Naive thymus-derived CD4-positive, alpha-beta T cell (primary cell): ENCODE measurements at regions of chr11 and their contacts with region 1.

Region 1: DNA sequence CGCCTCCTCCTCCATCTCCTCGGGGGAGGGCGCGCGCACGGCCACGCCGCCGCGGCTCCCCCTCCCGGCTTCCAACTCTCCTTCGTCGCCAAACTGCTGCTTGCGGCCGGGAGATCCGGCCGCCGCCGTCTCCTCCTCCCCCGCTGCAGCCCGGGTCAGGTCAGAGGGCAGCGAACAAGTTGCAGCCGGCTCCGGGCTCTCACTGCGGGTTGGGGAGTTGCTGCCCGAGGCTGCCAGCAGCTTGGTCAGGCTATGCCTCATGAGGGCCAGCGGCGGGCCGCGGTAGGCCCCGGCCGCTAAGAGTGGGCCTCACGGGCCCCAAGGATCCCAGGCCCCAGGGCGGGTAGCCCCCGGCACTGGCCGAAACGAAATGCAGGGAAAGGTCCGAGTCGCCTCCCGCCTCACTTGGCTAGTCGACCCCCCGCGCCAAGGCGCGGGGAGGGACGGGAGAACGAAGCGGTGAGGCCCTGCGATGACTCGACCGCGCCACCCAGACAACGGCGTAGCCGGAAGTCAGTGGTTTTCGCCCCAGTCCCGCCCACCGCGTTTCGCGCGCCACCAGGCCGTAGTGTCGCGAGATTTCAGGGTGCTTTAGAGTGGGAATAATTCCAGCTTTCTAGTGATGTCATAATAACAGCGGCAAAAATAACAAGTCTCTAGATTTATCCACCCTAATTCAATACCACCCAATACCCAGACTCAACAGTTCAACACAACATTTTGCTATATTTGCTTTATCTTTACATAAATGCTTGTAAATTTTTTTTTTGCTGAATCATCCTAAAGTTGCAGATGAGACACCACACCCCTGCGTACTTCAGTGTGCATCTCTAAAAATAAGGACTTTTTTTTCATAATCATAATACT is at the start of gene CREBZF:
- DNase-seq: peak; percentile 83 to 96 (median 92)
- ATAC-seq: peak; percentile 85
- H3K4me3 ChIP-seq: peak within 1 kb of the TSS; percentile 97
- H3K4me3 Mint-ChIP-seq: peak within 1 kb of the TSS; percentile 93 to 100 (median 99)
- H3K27ac ChIP-seq: peak within 1 kb of the TSS; percentile 99
- H3K27ac Mint-ChIP-seq: peak within 1 kb of the TSS; percentile 96 to 100 (median 99)
- H3K4me1 ChIP-seq: peaks cover 19 to 31% of the 10 kb centered on the region in 2 donors
- H3K4me1 Mint-ChIP-seq: peaks cover 29 to 55% (median 39%) of the 10 kb centered on the region in 7 donors
- H3K27me3 ChIP-seq: no peaks in the 10 kb centered on the region
- H3K27me3 Mint-ChIP-seq: peaks cover 0 to 5% (median 0%) of the 10 kb centered on the region in 5 donors
- total RNA-seq, gene CREBZF: 56.9 to 114 (median 59.7) TPM

Region 2: DNA sequence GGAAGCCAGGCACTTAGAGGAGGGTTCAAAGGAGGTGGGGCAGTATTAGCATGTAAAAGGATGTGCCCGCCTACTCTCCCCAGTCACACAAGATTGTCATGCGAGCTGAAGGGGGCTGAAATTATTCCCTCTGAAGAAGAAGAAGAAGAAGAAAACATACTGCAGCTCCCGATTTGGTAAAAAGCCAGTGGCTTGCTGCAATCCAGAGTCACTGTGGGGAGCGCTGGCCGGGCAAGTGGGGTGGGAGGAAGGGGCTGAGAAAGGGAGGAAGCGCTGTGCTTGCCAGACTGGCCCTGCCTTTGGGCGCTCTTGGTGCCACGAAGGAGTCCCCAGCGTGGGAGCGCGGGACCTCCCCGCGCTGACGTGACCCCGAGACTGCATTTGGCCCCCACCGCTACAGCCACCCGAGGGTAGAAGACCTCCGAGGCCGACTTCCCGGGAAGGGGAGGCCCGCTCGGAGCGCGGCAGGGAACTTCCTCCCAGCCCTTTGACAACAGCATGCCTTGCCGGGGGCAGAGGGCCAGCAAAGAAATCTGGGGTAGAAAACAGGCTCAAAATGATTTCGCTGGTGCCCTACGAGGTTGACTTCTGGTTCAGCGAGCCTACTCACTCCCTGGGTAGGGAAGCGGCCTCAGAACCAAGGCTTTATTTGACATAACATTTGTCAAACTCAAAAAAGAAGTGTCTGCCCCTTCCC is 944.0 kb before region 1 on chr11:
- CTCF ChIA-PET with region 1: no interaction called
- POLR2A ChIA-PET with region 1: no interaction called
- intact Hi-C with region 1: loop called in 1 of 2 experiments (anchors 10 kb)
- DNase-seq: peak in 8 of 9 donors; percentile 1 to 23 (median 14)
- ATAC-seq: peak; percentile 40
- H3K4me3 ChIP-seq: no peak overlapping the region
- H3K4me3 Mint-ChIP-seq: peak overlapping the region; percentile 63 to 89 (median 80)
- H3K27ac ChIP-seq: no peak overlapping the region
- H3K27ac Mint-ChIP-seq: peak overlapping the region in 8 of 9 donors; percentile 52 to 92 (median 75)
- H3K4me1 ChIP-seq: no peaks in the 10 kb centered on the region
- H3K4me1 Mint-ChIP-seq: peaks cover 0 to 21% (median 13%) of the 10 kb centered on the region in 7 donors
- H3K27me3 ChIP-seq: no peaks in the 10 kb centered on the region
- H3K27me3 Mint-ChIP-seq: peaks cover 4 to 24% (median 11%) of the 10 kb centered on the region in 5 donors

Region 3: DNA sequence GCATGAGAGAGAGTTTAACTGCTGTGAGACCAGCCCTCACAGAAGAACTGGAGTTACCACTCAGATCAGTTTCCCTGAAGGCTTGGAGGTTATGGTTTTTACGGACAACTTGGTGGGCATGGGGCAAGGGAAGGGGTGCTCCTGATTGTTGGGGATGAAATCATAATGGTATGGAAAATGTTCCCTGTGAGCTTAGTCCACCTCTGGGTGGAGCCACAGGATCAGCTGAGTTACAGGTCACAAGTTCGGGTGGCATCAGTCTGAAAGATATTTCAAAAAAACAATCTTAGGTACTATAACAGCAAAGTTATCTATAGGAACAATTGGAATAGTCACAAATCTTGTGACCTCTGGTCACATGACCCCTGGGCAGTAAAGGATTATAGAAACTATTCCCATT is 200.6 kb before region 1 on chr11:
- CTCF ChIA-PET with region 1: no interaction called
- POLR2A ChIA-PET with region 1: no interaction called
- intact Hi-C with region 1: no loop called
- DNase-seq: no peak
- ATAC-seq: no peak
- H3K4me3 ChIP-seq: no peak overlapping the region
- H3K4me3 Mint-ChIP-seq: no peak overlapping the region
- H3K27ac ChIP-seq: no peak overlapping the region
- H3K27ac Mint-ChIP-seq: no peak overlapping the region
- H3K4me1 ChIP-seq: no peaks in the 10 kb centered on the region
- H3K4me1 Mint-ChIP-seq: no peaks in the 10 kb centered on the region
- H3K27me3 ChIP-seq: no peaks in the 10 kb centered on the region
- H3K27me3 Mint-ChIP-seq: no peaks in the 10 kb centered on the region

Region 4: GRCh38 chr11:85647604-85648299 is 17.1 kb before region 1 on chr11 and contains the start of gene TMEM126A:
- CTCF ChIA-PET with region 1: interaction called, 6 read pairs
- POLR2A ChIA-PET with region 1: interaction called, 207 read pairs
- intact Hi-C with region 1: loop called (anchors 1 kb)
- DNase-seq: peak; percentile 85 to 92 (median 90)
- ATAC-seq: peak; percentile 99
- H3K4me3 ChIP-seq: peak within 1 kb of the TSS; percentile 83
- H3K4me3 Mint-ChIP-seq: peak within 1 kb of the TSS; percentile 92 to 100 (median 98)
- H3K27ac ChIP-seq: peak within 1 kb of the TSS; percentile 87
- H3K27ac Mint-ChIP-seq: peak within 1 kb of the TSS; percentile 86 to 99 (median 98)
- H3K4me1 ChIP-seq: peaks cover 11 to 14% of the 10 kb centered on the region in 2 donors
- H3K4me1 Mint-ChIP-seq: peaks cover 9 to 48% (median 38%) of the 10 kb centered on the region in 7 donors
- H3K27me3 ChIP-seq: no peaks in the 10 kb centered on the region
- H3K27me3 Mint-ChIP-seq: peaks cover 12 to 29% (median 22%) of the 10 kb centered on the region in 5 donors
- total RNA-seq, gene TMEM126A: 17.8 to 40.8 (median 18.9) TPM

Region 5: DNA sequence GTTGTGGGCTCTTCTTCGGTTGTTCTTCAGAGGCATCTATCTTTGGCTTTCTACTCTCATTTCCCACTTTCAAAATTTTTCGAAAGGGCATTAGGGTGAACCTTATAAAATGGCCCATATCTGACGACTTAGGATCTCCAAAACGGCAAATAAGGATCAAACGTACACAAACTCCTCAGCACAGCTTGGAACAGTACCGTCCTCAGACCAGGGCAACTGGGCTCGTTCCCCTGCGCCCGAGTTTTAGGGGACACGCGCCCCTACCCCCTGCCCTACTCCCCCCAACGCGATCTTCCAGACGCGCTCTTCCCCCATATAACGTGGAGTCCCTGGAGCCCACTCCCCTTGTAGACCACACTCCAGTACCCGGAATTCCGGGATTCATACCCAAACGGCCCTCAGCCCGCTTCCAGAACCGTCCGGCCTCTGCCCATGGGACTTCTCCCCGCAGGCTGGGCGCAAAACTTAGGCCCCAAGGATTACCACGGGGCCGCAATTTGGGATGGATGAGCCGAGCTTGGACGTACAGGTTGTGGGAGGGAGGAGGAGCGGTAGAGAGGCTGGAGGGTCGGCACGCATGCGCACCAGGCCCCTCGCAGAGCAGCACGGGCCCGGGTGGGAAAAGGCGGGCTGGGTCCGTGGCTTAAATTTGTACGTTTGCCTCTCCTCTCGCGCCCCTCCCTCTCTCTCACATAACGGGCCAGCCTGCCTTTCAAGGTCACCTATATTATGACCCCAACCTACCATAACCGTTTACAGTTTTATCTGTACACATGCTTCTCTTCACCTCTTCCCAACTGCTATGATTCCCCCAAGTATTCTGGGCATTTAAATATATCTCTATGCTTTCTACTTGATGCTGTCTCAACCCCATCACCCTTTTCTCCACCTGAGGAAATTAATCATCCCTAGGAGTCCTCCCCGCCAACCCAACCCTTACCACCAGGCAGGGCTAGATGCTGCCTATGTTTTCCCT is 17.8 kb after region 1 on chr11:
- CTCF ChIA-PET with region 1: interaction called, 4 read pairs
- POLR2A ChIA-PET with region 1: interaction called, 6 read pairs
- intact Hi-C with region 1: loop called (anchors 1 kb)
- DNase-seq: peak; percentile 27 to 66 (median 43)
- ATAC-seq: peak; percentile 78
- H3K4me3 ChIP-seq: peak overlapping the region; percentile 82
- H3K4me3 Mint-ChIP-seq: peak overlapping the region; percentile 78 to 92 (median 88)
- H3K27ac ChIP-seq: peak overlapping the region; percentile 75
- H3K27ac Mint-ChIP-seq: peak overlapping the region; percentile 60 to 93 (median 81)
- H3K4me1 ChIP-seq: no peaks in the 10 kb centered on the region
- H3K4me1 Mint-ChIP-seq: peaks cover 10 to 28% (median 14%) of the 10 kb centered on the region in 7 donors
- H3K27me3 ChIP-seq: no peaks in the 10 kb centered on the region
- H3K27me3 Mint-ChIP-seq: peaks cover 0 to 24% (median 4%) of the 10 kb centered on the region in 5 donors

Region 6: DNA sequence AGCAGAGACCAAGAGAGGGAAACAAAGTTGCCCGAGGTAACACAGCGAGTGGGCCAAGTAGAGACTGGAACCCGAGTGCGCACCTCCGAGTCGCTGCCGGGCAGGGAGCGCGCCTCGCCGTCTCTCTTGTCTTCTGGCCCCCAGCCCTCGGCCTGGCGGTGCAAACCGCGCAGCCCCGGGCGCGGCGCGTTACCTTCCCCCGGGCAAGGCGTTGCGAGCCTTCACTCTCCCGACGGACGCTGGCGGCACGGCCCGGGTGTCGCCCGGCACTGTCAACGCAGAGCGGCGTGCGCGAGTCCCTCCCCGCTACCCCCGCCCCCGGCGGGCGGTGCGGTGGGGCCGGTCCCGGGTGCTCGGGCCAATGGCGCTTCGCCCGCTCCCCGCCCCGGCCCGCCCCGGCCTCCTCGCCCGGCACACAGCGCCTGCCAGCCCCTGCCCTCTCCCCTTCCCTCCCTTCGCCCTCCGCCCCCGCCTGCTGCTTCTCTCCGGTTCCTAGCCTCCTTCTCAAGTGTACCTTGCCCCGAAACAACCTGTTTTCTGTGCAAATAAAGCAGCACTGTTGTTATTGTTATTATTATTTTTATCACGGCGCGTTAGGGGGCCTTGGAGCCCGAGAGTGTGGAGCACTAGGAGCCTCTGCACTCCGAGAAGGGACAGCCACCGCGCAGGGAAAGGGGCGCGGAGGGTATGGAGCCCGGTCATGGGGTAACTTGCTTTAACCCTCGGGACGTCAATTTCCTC is 146.2 kb after region 1 on chr11 and contains the start of gene SYTL2:
- CTCF ChIA-PET with region 1: no interaction called
- POLR2A ChIA-PET with region 1: interaction called, 4 read pairs
- intact Hi-C with region 1: loop called in 1 of 2 experiments (anchors 1 kb)
- DNase-seq: peak; percentile 69 to 87 (median 75)
- ATAC-seq: peak; percentile 95
- H3K4me3 ChIP-seq: peak within 1 kb of the TSS; percentile 86
- H3K4me3 Mint-ChIP-seq: peak within 1 kb of the TSS; percentile 87 to 97 (median 95)
- H3K27ac ChIP-seq: peak within 1 kb of the TSS; percentile 64
- H3K27ac Mint-ChIP-seq: peak within 1 kb of the TSS; percentile 79 to 98 (median 93)
- H3K4me1 ChIP-seq: peaks cover 14 to 32% of the 10 kb centered on the region in 2 donors
- H3K4me1 Mint-ChIP-seq: peaks cover 32 to 61% (median 52%) of the 10 kb centered on the region in 7 donors
- H3K27me3 ChIP-seq: no peaks in the 10 kb centered on the region
- H3K27me3 Mint-ChIP-seq: peaks cover 0 to 10% (median 0%) of the 10 kb centered on the region in 5 donors
- total RNA-seq, gene SYTL2: 24.8 to 62.9 (median 27.5) TPM

Region 7: GRCh38 chr11:86302100-86302793 is 637.4 kb after region 1 on chr11 and contains the start of gene HIKESHI:
- CTCF ChIA-PET with region 1: no interaction called
- POLR2A ChIA-PET with region 1: interaction called, 5 read pairs
- intact Hi-C with region 1: loop called (anchors 1 kb)
- DNase-seq: peak; percentile 70 to 92 (median 81)
- ATAC-seq: peak; percentile 100
- H3K4me3 ChIP-seq: peak within 1 kb of the TSS; percentile 96
- H3K4me3 Mint-ChIP-seq: peak within 1 kb of the TSS; percentile 95 to 100 (median 100)
- H3K27ac ChIP-seq: peak within 1 kb of the TSS; percentile 86
- H3K27ac Mint-ChIP-seq: peak within 1 kb of the TSS; percentile 92 to 100 (median 97)
- H3K4me1 ChIP-seq: peaks cover 10 to 13% of the 10 kb centered on the region in 2 donors
- H3K4me1 Mint-ChIP-seq: peaks cover 4 to 37% (median 32%) of the 10 kb centered on the region in 7 donors
- H3K27me3 ChIP-seq: no peaks in the 10 kb centered on the region
- H3K27me3 Mint-ChIP-seq: peaks cover 0 to 8% (median 0%) of the 10 kb centered on the region in 5 donors
- total RNA-seq, gene HIKESHI: 16.7 to 38.4 (median 29.5) TPM